ENCODE measurements at regions of chr17 and their contacts with region 1.

Region 1: GRCh38 chr17:81101614-81102306 is 63.5 kb upstream of the PVALEF start:
- H3K4me3 ChIP-seq: no peak overlapping the region
- H3K27ac ChIP-seq: no peak overlapping the region
- H3K4me1 ChIP-seq: peaks cover 5% of the 10 kb centered on the region
- CTCF ChIP-seq: peak; percentile 100

Region 2: GRCh38 chr17:80991645-80992076 is 110.1 kb before region 1 on chr17 and contains the start of gene CHMP6:
- CTCF ChIA-PET with region 1: interaction called, 17 read pairs
- POLR2A ChIA-PET with region 1: no interaction called
- H3K4me3 ChIP-seq: peak within 1 kb of the TSS; percentile 63
- H3K27ac ChIP-seq: peak within 1 kb of the TSS; percentile 63; the same call in 1 of the 2 replicates
- H3K4me1 ChIP-seq: peaks cover 2% of the 10 kb centered on the region; the same call in 1 of the 2 replicates
- CTCF ChIP-seq: no peak; the same call in 1 of the 2 replicates

Region 3: DNA sequence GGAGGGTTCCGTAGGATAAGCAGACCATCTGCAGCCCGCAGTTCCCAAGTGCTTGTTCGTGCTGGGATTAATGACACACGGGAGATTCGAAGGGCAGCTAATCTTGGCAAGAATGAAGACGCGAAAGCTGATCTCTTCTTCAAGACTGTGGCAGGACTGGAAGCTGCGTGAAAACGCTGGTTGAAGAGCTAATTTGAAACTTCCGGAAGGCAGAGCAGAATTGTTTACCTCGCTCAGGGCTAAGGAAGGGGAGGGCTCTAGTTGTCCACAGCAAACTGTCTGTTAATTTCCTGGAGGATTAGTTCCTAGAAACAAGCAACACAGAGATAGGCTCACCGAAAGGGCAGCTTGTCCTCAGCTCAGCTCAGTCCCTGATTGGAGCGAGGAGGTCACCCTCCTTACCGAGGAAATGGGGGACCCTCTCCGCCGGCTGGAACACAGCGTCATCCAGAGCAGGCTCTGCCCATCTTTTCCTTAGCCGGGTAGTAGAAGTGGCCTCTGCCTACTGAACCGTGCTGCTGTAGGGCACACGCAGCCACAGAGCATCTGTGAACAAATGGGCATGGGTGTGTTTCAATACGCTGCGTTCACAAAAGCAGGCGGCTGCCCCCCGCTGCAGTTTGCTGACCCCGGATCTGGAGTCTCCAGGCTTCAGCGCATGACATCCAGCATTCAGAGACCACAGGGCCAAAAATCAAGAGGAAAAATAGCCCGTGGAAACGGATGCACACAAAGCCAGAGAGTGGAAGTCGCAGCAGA is 83.5 kb before region 1 on chr17:
- CTCF ChIA-PET with region 1: interaction called, 109 read pairs
- POLR2A ChIA-PET with region 1: no interaction called
- H3K4me3 ChIP-seq: no peak overlapping the region
- H3K27ac ChIP-seq: no peak overlapping the region
- H3K4me1 ChIP-seq: no peaks in the 10 kb centered on the region
- CTCF ChIP-seq: no peak

Region 4: GRCh38 chr17:81025741-81026129 is 76.0 kb before region 1 on chr17:
- CTCF ChIA-PET with region 1: interaction called, 109 read pairs
- POLR2A ChIA-PET with region 1: interaction called, 7 read pairs
- H3K4me3 ChIP-seq: no peak overlapping the region
- H3K27ac ChIP-seq: no peak overlapping the region
- H3K4me1 ChIP-seq: no peaks in the 10 kb centered on the region
- CTCF ChIP-seq: no peak

Region 5: DNA sequence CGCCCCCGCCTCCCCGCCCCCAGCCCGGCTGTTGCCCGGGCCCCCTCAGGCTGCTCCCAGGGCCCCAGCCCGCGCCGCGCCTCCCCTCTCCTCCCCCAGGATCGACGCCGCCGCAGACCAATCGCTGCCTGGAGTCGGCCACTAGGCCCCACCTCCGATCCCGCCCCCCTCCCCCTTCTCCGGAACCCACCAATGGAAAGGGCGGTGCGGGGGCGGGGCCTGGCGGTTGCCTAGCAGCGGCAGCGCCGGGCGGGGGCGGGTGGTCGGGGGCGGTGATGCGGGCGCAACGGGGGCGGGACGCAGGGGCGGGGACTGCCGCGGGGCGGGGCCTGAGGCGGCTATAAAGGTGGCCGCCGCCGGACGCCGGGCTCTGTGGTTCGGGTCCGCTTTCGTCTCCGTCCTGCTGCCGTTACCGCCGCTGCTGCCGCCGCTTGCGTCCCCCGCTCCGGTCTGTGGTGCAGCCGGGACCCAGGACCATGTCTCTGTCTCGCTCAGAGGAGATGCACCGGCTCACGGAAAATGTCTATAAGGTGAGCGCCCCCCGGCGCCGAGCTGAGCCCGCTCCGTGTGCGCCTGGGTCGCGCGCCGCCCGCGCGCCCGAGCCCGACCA is 66.9 kb before region 1 on chr17 and contains the start of gene BAIAP2:
- CTCF ChIA-PET with region 1: interaction called, 32 read pairs
- POLR2A ChIA-PET with region 1: interaction called, 8 read pairs
- H3K4me3 ChIP-seq: peak within 1 kb of the TSS; percentile 75
- H3K27ac ChIP-seq: peak within 1 kb of the TSS; percentile 58; the same call in 1 of the 2 replicates
- H3K4me1 ChIP-seq: peaks cover 4% of the 10 kb centered on the region; the same call in 1 of the 2 replicates
- CTCF ChIP-seq: peak; percentile 47; the same call in 1 of the 2 replicates

Region 6: DNA sequence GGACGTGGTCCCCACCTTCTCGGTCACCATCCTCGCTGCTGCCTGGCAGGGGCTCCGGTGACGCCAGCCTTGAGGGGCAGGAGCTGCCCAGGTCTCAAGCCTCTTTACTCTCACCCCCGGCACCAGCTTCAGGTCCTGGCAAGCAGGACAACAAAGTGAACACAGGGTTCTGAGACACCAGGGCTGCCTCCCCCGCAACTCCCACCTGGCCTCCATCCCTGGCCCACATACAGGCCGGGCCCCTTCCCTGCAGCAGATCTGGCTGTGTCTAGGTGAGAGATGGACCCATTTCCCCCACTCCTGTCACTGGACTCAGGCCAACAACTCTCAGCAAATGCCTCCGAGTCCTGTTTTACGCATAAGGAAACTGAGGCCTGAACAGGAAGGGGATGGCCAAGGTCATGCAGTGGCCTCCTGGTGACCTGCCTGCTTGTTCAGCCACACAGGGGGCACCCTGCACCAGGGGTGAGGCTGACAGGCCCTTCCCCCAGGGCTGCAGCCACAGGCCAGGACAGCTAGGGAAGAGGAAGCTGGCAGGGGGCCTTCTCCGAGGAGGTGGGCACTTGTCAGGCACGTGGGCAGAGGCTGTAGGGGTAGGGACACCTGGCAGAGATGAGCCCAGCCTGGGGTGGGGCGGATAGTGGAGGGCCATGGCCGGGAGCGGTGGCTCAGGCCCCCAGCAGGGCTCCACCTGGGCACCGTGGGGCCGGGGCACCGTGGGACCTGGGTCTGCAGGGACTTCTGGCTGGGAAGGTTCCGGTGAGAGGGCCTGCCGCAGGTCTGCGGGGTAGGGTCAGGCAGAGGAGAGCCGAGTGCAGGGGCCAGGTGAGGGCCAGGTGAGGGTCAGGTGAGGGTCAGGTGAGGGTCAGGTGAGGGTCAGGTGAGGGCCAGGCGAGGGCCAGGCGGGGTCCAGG is 16.8 kb after region 1 on chr17:
- CTCF ChIA-PET with region 1: interaction called, 29 read pairs
- POLR2A ChIA-PET with region 1: interaction called, 4 read pairs
- H3K4me3 ChIP-seq: no peak overlapping the region
- H3K27ac ChIP-seq: no peak overlapping the region; the same call in 1 of the 2 replicates
- H3K4me1 ChIP-seq: no peaks in the 10 kb centered on the region
- CTCF ChIP-seq: no peak